IMR-90 (cell line): ENCODE measurements at regions of chr1 and their contacts with region 1.

Region 1: DNA sequence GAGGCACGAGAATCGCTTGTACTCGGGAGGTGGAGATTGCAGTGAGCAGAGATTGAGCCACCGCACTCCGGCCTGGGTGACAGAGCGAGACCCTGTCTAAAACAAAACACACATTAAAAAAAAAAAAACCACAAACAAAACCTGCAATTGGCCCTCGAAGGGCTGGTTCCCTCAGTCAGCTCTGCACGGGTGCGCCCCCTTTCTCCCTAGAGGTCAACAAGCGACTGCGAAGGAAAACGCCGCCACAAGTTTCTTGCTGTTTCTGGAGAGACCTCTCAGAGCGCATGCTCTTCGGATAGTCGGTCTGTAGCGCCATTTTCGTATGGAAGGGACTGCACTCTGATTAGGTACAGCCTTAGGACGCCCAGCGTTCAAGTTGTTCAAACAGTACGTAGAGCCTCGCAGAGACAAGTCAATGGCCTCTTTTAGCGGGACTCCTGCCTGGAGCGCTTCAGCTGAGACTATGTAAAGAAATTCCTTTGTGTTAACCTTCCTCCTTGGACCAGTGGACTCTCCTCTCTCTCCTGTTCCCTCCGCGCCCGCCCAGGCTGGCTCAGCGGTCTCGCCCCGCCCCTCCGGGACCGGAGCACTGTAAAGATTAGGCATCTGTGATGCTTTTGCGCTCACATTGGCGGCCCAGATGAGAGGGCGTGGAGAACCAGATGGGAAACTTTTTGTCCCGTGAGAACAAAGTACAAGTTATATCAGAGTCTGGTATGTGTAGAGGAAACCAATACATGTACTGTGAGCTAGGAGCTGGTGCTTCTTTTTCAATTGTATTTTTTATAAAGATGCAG is 1.0 kb upstream of the CDC14A start:
- DNase-seq: peak; percentile 84
- ATAC-seq: peak; percentile 79
- H3K4me3 ChIP-seq: peak overlapping the region; percentile 86
- H3K27ac ChIP-seq: peak overlapping the region; percentile 69
- H3K4me1 ChIP-seq: peaks cover 4% of the 10 kb centered on the region; the same call in 1 of the 2 replicates
- H3K27me3 ChIP-seq: no peaks in the 10 kb centered on the region
- CTCF ChIP-seq: no peak
- POLR2A ChIP-seq: peak; percentile 20; the same call in 1 of the 2 replicates
- RAD21 ChIP-seq: no peak

Region 2: DNA sequence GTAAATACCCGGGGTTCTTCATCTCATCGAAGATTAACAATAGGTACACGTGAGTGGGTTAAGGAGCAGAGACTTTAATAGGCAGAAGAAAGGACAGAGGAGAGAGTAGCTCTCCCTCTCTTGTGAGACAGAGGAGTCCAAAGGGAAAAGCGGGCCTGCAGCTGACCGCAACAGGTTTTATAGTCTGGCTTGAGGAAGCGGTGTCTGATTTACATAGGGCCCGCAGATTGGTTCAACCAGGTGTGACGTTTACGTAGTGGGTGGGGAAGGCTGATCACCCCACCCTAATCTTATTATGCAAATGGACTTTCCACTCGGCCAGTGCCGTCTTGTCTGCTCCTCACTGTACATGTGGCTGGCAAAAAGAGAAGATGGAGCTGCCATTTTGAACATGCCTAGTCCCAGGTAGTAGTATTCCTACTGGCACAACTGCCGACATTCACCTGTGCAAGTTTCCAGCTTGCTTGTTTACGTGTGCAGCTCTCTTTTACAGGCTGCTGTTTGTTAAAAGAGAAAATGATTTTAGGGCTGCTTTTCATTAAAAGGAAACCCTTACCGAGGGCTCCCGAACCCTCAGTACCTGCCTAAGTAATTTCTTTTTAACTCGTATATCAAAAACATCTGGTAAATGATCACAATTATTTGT is 11.7 kb after region 1 on chr1:
- CTCF ChIA-PET with region 1: no interaction called
- POLR2A ChIA-PET with region 1: no interaction called
- dilution Hi-C with region 1: no loop called
- in situ Hi-C with region 1: no loop called
- intact Hi-C with region 1: no loop called
- DNase-seq: no peak
- ATAC-seq: no peak
- H3K4me3 ChIP-seq: no peak overlapping the region
- H3K27ac ChIP-seq: no peak overlapping the region
- H3K4me1 ChIP-seq: no peaks in the 10 kb centered on the region
- H3K27me3 ChIP-seq: no peaks in the 10 kb centered on the region
- CTCF ChIP-seq: no peak
- POLR2A ChIP-seq: no peak
- RAD21 ChIP-seq: no peak

Region 3: GRCh38 chr1:100400404-100400803 is 49.1 kb after region 1 on chr1:
- CTCF ChIA-PET with region 1: no interaction called
- POLR2A ChIA-PET with region 1: no interaction called
- dilution Hi-C with region 1: no loop called
- in situ Hi-C with region 1: no loop called
- intact Hi-C with region 1: no loop called
- DNase-seq: no peak
- ATAC-seq: peak; percentile 44; the same call in 1 of the 2 replicates
- H3K4me3 ChIP-seq: no peak overlapping the region
- H3K27ac ChIP-seq: no peak overlapping the region
- H3K4me1 ChIP-seq: 0 out of 2 replicates have a peak, but pooled peaks cover 1% of the 10 kb centered on the region
- H3K27me3 ChIP-seq: no peaks in the 10 kb centered on the region
- CTCF ChIP-seq: no peak
- POLR2A ChIP-seq: no peak
- RAD21 ChIP-seq: no peak

Region 4: DNA sequence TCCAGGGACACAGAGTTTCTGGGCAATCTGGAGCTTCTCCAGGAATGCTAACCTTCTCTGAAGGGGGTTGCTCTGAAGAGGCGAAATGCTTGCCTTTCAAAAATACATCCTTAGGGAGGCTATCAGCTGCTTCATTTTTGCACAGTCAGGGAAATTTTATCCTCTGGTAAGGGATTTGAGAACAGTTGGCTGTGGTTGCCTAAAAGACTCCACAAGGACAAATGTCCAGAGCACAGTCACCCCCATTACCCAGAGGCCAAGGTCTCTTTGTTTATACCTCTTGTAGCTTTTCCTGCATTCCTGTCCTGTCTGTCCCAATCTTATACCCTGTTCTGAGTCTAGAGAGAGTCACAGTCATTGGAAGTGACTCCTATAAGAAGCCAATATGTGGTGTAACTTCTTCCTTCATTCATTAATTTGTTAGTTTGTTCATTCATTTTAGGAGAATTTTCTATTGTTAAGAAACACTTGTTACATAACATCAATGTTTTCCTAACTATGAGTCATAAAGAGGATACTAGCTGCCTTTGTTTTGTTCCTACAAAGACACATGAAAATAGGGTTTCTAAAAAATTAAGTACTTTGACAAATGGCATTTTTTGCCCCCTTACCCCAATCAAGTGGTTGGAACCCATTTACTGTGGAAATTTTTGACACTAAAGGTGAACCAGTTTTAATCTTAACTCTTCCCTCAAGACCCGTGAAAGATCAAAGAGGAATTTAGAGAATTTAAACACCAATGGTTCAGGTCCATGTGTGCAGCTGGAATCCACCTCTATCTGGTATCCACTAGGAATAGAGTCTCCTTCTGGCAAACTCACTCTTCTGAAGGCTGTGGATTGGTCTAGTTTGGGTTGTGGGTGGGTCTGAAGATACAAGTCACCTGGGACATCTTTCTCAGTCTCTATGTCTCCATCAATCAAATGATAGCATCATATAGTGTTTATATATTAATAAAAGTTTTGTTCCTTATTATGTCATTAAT is 233.8 kb after region 1 on chr1:
- CTCF ChIA-PET with region 1: no interaction called
- POLR2A ChIA-PET with region 1: interaction called, 10 read pairs
- dilution Hi-C with region 1: no loop called
- in situ Hi-C with region 1: no loop called
- intact Hi-C with region 1: no loop called
- DNase-seq: peak; percentile 12
- ATAC-seq: no peak
- H3K4me3 ChIP-seq: no peak overlapping the region
- H3K27ac ChIP-seq: no peak overlapping the region
- H3K4me1 ChIP-seq: no peaks in the 10 kb centered on the region; the same call in 1 of the 2 replicates
- H3K27me3 ChIP-seq: no peaks in the 10 kb centered on the region
- CTCF ChIP-seq: no peak
- POLR2A ChIP-seq: no peak
- RAD21 ChIP-seq: no peak